ENCODE measurements at regions of chr11 and their contacts with region 1.

Region 1: GRCh38 chr11:1652771-1653540 is 23.4 kb downstream of the KRTAP5-5 start:
- DNase-seq: peak; percentile 66
- H3K4me3 Mint-ChIP-seq: no peak overlapping the region
- H3K27ac Mint-ChIP-seq: no peak overlapping the region
- H3K4me1 Mint-ChIP-seq: no peaks in the 10 kb centered on the region
- H3K27me3 Mint-ChIP-seq: peaks cover 6% of the 10 kb centered on the region

Region 2: GRCh38 chr11:1442163-1442562 is 210.8 kb before region 1 on chr11:
- intact Hi-C with region 1: no loop called
- DNase-seq: no peak
- H3K4me3 Mint-ChIP-seq: no peak overlapping the region
- H3K27ac Mint-ChIP-seq: no peak overlapping the region
- H3K4me1 Mint-ChIP-seq: no peaks in the 10 kb centered on the region
- H3K27me3 Mint-ChIP-seq: no peaks in the 10 kb centered on the region

Region 3: DNA sequence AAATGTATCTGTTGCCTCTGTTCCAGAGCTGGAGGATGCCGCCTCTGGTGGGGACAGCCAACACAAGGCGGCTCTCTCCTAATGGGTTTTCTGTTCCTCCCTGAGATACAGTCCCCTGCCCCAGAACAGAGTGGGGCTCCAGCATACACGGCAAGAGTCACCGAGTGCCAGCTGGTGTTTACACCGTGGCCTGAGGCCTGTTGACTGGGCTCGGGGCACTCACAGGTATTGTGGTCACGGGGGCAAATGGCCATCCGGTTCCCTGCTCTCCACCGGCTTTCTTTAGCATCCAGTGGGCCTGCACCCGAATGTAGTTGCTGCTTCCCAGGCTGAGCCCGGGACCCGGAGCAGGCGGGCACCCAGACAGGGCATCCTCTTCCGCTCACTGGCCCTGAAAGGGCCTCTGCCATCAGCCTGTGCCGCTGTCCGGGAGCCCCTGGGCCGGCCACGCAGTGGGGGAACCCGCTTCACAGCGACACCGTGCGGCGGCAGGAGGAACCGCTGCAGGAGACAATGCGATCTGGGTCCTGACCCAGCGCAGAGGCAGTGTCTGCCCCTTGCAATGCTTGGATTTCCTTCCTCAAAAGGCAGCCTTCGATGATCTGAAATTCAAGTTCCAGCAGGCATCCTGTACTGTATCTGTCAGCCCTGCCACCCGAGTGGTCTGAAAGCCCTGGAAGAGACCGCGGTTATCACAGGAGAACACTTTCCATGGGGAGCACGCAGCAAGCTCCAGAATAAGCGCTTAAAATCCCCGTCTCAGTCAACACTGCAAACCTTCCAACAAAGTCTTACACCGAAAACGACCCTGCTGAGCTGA is 24.2 kb before region 1 on chr11:
- intact Hi-C with region 1: no loop called
- DNase-seq: peak; percentile 34
- H3K4me3 Mint-ChIP-seq: no peak overlapping the region
- H3K27ac Mint-ChIP-seq: no peak overlapping the region
- H3K4me1 Mint-ChIP-seq: peaks cover 4% of the 10 kb centered on the region
- H3K27me3 Mint-ChIP-seq: peaks cover 15% of the 10 kb centered on the region

Region 4: GRCh38 chr11:1832211-1832919 is 179.4 kb after region 1 on chr11:
- intact Hi-C with region 1: loop called (anchors 1 kb)
- DNase-seq: peak; percentile 51
- H3K4me3 Mint-ChIP-seq: no peak overlapping the region
- H3K27ac Mint-ChIP-seq: no peak overlapping the region
- H3K4me1 Mint-ChIP-seq: no peaks in the 10 kb centered on the region
- H3K27me3 Mint-ChIP-seq: peaks cover 2% of the 10 kb centered on the region

Measured in activated T-helper 1 cell treated with anti-CD3 and anti-CD28 coated beads, Interleukin-12 subunit alpha, Interleukin-12 subunit beta, Interleukin-2, Interleukin-4 antibody, amounts not matched to agents 30 ng/mL and 10 ng/mL and 1 ng/mL, durations not matched to agents 14 hours and 24 hours and 36 hours (primary cell).